Heart right ventricle (tissue), 16 donors: ENCODE measurements at regions of chr5 and their contacts with region 1.

Region 1: GRCh38 chr5:158485604-158486081 is 614.1 kb downstream of the EBF1 start:
- DNase-seq: peak in 1 of 2 donors; percentile 58
- ATAC-seq: peak in 7 of 8 donors; percentile 56 to 77 (median 72)
- H3K4me3 ChIP-seq: no peak overlapping the region
- H3K27ac ChIP-seq: peak overlapping the region; percentile 31 to 81 (median 61)
- H3K4me1 ChIP-seq: peaks cover 2 to 69% (median 24%) of the 10 kb centered on the region in 9 donors
- H3K27me3 ChIP-seq: no peaks in the 10 kb centered on the region
- CTCF ChIP-seq: no peak

Region 2: GRCh38 chr5:158423623-158424200 is 61.9 kb before region 1 on chr5:
- intact Hi-C with region 1: loop called in 1 of 10 experiments (anchors 5 kb)
- DNase-seq: no peak
- ATAC-seq: peak in 6 of 8 donors; percentile 48 to 73 (median 62)
- H3K4me3 ChIP-seq: no peak overlapping the region
- H3K27ac ChIP-seq: peak overlapping the region in 9 of 10 donors; percentile 45 to 84 (median 78)
- H3K4me1 ChIP-seq: peaks cover 0 to 43% (median 22%) of the 10 kb centered on the region in 9 donors
- H3K27me3 ChIP-seq: no peaks in the 10 kb centered on the region
- CTCF ChIP-seq: no peak

Region 3: GRCh38 chr5:158543539-158544387 is 58.1 kb after region 1 on chr5:
- intact Hi-C with region 1: loop called in 1 of 10 experiments (anchors 10 kb)
- DNase-seq: no peak
- ATAC-seq: peak in 7 of 8 donors; percentile 60 to 90 (median 80)
- H3K4me3 ChIP-seq: no peak overlapping the region
- H3K27ac ChIP-seq: peak overlapping the region; percentile 28 to 77 (median 56)
- H3K4me1 ChIP-seq: peaks cover 0 to 10% (median 0%) of the 10 kb centered on the region in 9 donors
- H3K27me3 ChIP-seq: no peaks in the 10 kb centered on the region
- CTCF ChIP-seq: no peak

Region 4: GRCh38 chr5:158609333-158610050 is 123.8 kb after region 1 on chr5:
- intact Hi-C with region 1: no loop called
- DNase-seq: no peak
- ATAC-seq: no peak
- H3K4me3 ChIP-seq: no peak overlapping the region
- H3K27ac ChIP-seq: no peak overlapping the region
- H3K4me1 ChIP-seq: no peaks in the 10 kb centered on the region
- H3K27me3 ChIP-seq: no peaks in the 10 kb centered on the region
- CTCF ChIP-seq: no peak